ENCODE measurements at regions of chr17 and their contacts with region 1.

Region 1: GRCh38 chr17:76515274-76515949 is 14.2 kb upstream of the RHBDF2 start:
- DNase-seq: peak; percentile 88
- H3K4me3 Mint-ChIP-seq: peak overlapping the region; percentile 62
- H3K27ac Mint-ChIP-seq: peak overlapping the region; percentile 92
- H3K4me1 Mint-ChIP-seq: peaks cover 22% of the 10 kb centered on the region
- H3K27me3 Mint-ChIP-seq: no peaks in the 10 kb centered on the region

Region 2: GRCh38 chr17:76474238-76474637 is 41.2 kb before region 1 on chr17:
- CTCF ChIA-PET with region 1: interaction called, 11 read pairs
- intact Hi-C with region 1: no loop called
- DNase-seq: no peak
- H3K4me3 Mint-ChIP-seq: no peak overlapping the region
- H3K27ac Mint-ChIP-seq: no peak overlapping the region
- H3K4me1 Mint-ChIP-seq: no peaks in the 10 kb centered on the region
- H3K27me3 Mint-ChIP-seq: no peaks in the 10 kb centered on the region

Region 3: DNA sequence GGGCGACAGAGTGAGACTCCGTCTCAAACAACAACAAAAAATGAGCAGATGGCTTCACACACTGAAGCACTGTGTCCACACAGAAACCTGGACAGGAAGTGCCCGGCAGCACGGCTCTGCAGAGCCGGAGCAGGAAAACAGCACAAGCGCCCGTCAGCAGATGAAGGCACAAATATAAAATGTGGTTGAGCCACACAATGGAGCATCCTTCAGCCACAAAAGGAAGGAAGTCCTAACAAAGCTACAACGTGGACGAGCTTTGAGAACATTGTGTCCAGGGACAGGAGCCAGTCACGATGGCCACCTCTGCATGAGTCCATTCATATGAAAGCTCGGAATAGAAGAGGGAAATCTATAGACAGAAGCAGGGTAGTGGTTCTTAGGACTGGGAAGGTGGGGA is 29.8 kb before region 1 on chr17:
- CTCF ChIA-PET with region 1: no interaction called
- intact Hi-C with region 1: no loop called
- DNase-seq: no peak
- H3K4me3 Mint-ChIP-seq: no peak overlapping the region
- H3K27ac Mint-ChIP-seq: no peak overlapping the region
- H3K4me1 Mint-ChIP-seq: no peaks in the 10 kb centered on the region
- H3K27me3 Mint-ChIP-seq: no peaks in the 10 kb centered on the region

Region 4: GRCh38 chr17:76671123-76671911 is 155.9 kb after region 1 on chr17:
- CTCF ChIA-PET with region 1: no interaction called
- intact Hi-C with region 1: loop called (anchors 2 kb)
- DNase-seq: peak; percentile 100
- H3K4me3 Mint-ChIP-seq: peak overlapping the region; percentile 93
- H3K27ac Mint-ChIP-seq: peak overlapping the region; percentile 92
- H3K4me1 Mint-ChIP-seq: peaks cover 29% of the 10 kb centered on the region
- H3K27me3 Mint-ChIP-seq: no peaks in the 10 kb centered on the region

Measured in activated naive CD4-positive, alpha-beta T cell treated with anti-CD3 and anti-CD28 coated beads for 36 hours (primary cell).